A673 (cell line): ENCODE measurements at regions of chr1 and their contacts with region 1.

Region 1: DNA sequence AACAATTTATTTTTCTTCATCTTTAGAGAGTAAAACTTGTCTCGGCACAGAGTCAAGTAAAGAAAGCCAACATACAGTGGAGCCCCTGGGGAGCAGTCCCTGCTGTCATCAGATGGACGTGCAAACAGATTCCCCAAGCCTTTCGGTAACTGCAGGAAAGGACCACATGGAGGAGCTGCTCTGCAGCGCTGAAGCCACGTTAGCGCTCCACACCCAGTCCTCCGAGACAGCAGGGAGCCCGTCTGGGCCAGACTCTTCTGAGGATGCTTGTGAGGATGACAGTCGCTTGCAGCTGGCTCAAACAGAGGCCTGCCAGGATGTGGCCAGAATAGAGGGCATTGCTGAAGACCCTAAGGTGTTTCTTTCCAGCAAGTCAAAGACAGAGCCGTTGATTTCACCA is 77.1 kb upstream of the SCCPDH start:
- DNase-seq: peak; percentile 94
- H3K4me3 ChIP-seq: no peak overlapping the region
- H3K27ac ChIP-seq: no peak overlapping the region
- H3K4me1 ChIP-seq: peaks cover 42% of the 10 kb centered on the region
- H3K27me3 ChIP-seq: no peaks in the 10 kb centered on the region
- CTCF ChIP-seq: peak; percentile 89

Region 2: GRCh38 chr1:246566128-246566812 is 80.8 kb before region 1 on chr1 and contains the starts of genes CNST and TFB2M:
- CTCF ChIA-PET with region 1: no interaction called
- POLR2A ChIA-PET with region 1: no interaction called
- intact Hi-C with region 1: loop called (anchors 5 kb)
- DNase-seq: peak; percentile 99
- H3K4me3 ChIP-seq: peak within 1 kb of the TSS; percentile 80
- H3K27ac ChIP-seq: peak within 1 kb of the TSS; percentile 78
- H3K4me1 ChIP-seq: peaks cover 23% of the 10 kb centered on the region
- H3K27me3 ChIP-seq: no peaks in the 10 kb centered on the region
- CTCF ChIP-seq: no peak
- total RNA-seq, gene CNST: 21.0 and 25.0 TPM in 2 replicates
- total RNA-seq, gene TFB2M: 18.0 and 21.1 TPM in 2 replicates

Region 3: GRCh38 chr1:246667773-246668172 is 20.7 kb after region 1 on chr1:
- CTCF ChIA-PET with region 1: no interaction called
- POLR2A ChIA-PET with region 1: no interaction called
- intact Hi-C with region 1: no loop called
- DNase-seq: peak; percentile 46
- H3K4me3 ChIP-seq: no peak overlapping the region
- H3K27ac ChIP-seq: no peak overlapping the region
- H3K4me1 ChIP-seq: peaks cover 5% of the 10 kb centered on the region
- H3K27me3 ChIP-seq: no peaks in the 10 kb centered on the region
- CTCF ChIP-seq: no peak

Region 4: DNA sequence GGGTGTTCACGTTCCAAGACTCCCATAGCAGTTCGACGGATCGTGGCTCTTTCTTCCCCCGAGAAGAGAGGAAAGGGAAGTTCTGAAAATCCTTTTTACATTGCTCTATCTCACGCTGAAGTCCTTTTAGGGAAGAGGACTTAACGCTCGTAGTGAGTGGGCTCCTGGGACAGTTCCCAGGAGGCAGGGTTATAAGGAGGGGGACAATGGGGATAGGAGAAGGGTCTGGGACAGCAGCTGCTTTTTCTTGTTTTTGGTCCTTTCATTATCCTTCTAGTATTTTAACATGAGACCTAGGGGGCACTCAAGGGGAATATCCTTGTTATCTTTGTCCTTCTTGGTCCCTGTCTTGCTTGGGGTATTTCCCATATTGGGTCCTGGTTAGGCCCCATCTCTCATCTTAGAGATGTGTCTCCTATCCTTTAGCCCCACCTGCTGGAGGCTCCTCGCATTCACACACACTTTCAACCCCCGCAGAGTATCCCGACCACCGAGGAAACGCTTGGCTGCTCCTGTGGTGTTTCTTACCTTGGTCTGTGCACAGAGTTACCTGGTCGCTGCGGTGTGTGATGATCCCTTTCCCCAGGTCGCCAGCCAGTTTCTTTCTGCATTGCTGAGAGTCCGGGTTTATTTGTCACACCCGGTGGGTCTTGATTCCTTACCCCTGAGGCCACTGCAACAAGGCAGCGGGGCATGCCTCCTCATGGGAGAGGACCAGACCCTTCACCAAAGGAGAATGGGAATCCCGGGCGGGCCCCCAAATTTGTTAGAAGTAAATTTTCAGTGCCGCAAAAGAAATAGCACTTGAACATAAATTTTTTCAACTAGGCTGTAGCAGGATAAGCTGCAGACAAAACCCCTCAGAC is 106.8 kb after region 1 on chr1:
- CTCF ChIA-PET with region 1: no interaction called
- POLR2A ChIA-PET with region 1: no interaction called
- intact Hi-C with region 1: loop called (anchors 5 kb)
- DNase-seq: peak; percentile 74
- H3K4me3 ChIP-seq: no peak overlapping the region
- H3K27ac ChIP-seq: no peak overlapping the region
- H3K4me1 ChIP-seq: peaks cover 3% of the 10 kb centered on the region
- H3K27me3 ChIP-seq: no peaks in the 10 kb centered on the region
- CTCF ChIP-seq: peak; percentile 81